Tibial artery (tissue), 4 donors: ENCODE measurements at regions of chr20 and their contacts with region 1.

Region 1: DNA sequence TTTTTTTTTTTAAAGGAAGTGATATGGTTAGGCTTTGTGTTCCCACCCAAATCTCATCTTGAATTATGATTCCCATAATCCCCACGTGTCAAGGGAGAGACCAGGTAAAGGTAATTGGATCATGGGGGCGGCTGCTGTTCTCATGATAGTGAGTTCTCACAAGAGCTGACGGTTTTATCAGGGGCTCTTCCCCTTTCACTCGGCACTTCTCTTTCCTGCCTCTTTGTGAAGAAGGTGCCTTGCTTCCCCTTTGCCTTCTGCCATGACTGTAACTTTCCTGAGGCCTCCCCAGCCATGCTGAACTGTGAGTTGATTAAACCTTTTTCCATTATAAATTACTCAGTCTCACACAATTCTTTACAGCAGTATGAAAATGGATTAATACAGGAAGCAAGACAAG is 64.3 kb downstream of the ZFP64 start:
- DNase-seq: no peak
- H3K4me3 ChIP-seq: no peak overlapping the region
- H3K27ac ChIP-seq: no peak overlapping the region
- H3K4me1 ChIP-seq: no peaks in the 10 kb centered on the region
- H3K27me3 ChIP-seq: no peaks in the 10 kb centered on the region
- CTCF ChIP-seq: no peak

Region 2: GRCh38 chr20:52172392-52173047 is 45.2 kb after region 1 on chr20:
- intact Hi-C with region 1: loop called (anchors 1 kb)
- DNase-seq: no peak
- H3K4me3 ChIP-seq: no peak overlapping the region
- H3K27ac ChIP-seq: no peak overlapping the region
- H3K4me1 ChIP-seq: no peaks in the 10 kb centered on the region
- H3K27me3 ChIP-seq: no peaks in the 10 kb centered on the region
- CTCF ChIP-seq: no peak